GM10248 (cell line): ENCODE measurements at regions of chr12 and their contacts with region 1.

Region 1: DNA sequence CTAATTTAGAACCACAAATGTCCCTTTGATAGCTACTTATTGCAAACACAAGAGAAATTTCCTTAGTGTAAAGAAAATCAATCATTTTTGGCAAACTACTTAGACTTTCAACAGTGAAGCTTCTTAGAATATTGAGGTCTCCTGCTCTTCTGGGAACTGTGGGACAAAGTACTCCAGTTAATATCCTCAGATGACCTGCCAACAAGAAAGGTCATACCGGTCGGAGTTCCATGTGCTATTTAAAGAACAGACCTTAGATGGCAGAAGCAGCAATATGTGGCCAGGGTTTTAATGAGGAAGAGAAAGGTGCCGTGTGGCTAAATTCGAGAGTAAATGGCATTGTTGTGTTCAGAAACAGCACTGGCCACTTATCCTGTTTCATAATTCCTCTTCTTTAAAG is 114.7 kb upstream of the AMIGO2 start:
- DNase-seq: no peak
- CTCF ChIP-seq: no peak

Region 2: DNA sequence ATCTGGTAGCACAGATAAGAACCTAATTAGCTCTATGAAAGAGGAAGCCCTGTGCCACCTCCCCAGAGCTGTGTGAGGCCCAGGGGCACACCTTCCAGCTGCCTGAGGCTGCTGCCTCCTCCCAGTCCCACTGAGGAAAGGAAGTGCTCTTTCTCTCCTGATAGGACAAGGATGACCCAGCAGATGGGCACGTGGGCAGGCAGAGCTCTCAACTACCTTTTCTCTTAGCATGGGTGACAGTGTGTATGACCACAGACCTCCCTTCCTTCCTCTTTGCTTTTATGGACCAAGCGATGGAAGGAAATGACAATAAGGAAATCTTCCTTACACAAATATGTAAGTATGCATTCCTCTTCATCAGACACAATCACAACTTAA is 12.8 kb after region 1 on chr12:
- CTCF ChIA-PET with region 1: interaction called, 13 read pairs
- POLR2A ChIA-PET with region 1: no interaction called
- DNase-seq: no peak
- CTCF ChIP-seq: no peak

Region 3: GRCh38 chr12:47591361-47591791 is 396.9 kb after region 1 on chr12:
- CTCF ChIA-PET with region 1: no interaction called
- POLR2A ChIA-PET with region 1: no interaction called
- DNase-seq: no peak
- CTCF ChIP-seq: no peak